ENCODE measurements at regions of chr12 and their contacts with region 1.

Region 1: GRCh38 chr12:45498645-45499044 is 230.9 kb upstream of the ARID2 start:
- DNase-seq: no peak
- H3K4me3 ChIP-seq: no peak overlapping the region
- H3K27ac ChIP-seq: no peak overlapping the region
- H3K4me1 ChIP-seq: no peaks in the 10 kb centered on the region
- H3K27me3 ChIP-seq: no peaks in the 10 kb centered on the region
- CTCF ChIP-seq: no peak
- EP300 ChIP-seq: no peak
- POLR2A ChIP-seq: no peak

Region 2: DNA sequence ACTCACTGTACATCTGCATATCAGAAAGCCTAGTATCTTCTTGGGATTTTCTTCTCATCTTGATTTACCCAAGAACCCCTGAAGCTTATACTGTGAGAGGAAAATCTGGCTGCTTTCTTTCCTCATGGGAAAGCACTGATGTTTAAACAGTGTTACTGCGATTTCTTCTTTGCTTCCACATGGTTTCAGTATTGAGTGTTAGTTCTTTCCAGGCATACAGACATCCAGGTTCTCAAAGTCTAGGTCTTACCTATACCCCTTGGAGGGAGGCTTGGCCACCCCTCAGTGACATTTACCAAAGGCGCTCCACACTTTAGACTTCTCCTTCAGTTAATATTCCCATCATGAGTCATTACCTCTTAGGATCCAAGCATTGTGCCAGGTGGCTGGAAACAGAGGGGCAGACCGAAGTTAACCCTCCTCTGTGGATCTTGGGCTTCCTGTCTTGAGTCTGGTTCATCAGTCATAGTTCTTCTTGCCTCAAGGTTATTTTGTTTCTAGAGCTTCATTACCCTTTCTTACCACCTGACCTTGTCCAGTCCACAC is 1583.6 kb before region 1 on chr12:
- in situ Hi-C with region 1: no loop called
- intact Hi-C with region 1: loop called (anchors 5 kb)
- DNase-seq: no peak
- H3K4me3 ChIP-seq: no peak overlapping the region
- H3K27ac ChIP-seq: no peak overlapping the region
- H3K4me1 ChIP-seq: no peaks in the 10 kb centered on the region
- H3K27me3 ChIP-seq: no peaks in the 10 kb centered on the region
- CTCF ChIP-seq: no peak
- EP300 ChIP-seq: no peak
- POLR2A ChIP-seq: no peak

Measured in transverse colon (tissue), 4 donors.